ENCODE measurements at regions of chr20 and their contacts with region 1.

Region 1: GRCh38 chr20:35954200-35954906 is at the start of gene SCAND1:
- DNase-seq: peak; percentile 94 to 98 (median 97)
- ATAC-seq: peak; percentile 92
- H3K4me3 ChIP-seq: peak within 1 kb of the TSS; percentile 84
- H3K4me3 Mint-ChIP-seq: peak within 1 kb of the TSS; percentile 86 to 99 (median 99)
- H3K27ac ChIP-seq: peak within 1 kb of the TSS; percentile 98
- H3K27ac Mint-ChIP-seq: peak within 1 kb of the TSS; percentile 96 to 100 (median 99)
- H3K4me1 ChIP-seq: peaks cover 17 to 23% of the 10 kb centered on the region in 2 donors
- H3K4me1 Mint-ChIP-seq: peaks cover 13 to 36% (median 22%) of the 10 kb centered on the region in 7 donors
- H3K27me3 ChIP-seq: no peaks in the 10 kb centered on the region
- H3K27me3 Mint-ChIP-seq: peaks cover 0 to 2% (median 0%) of the 10 kb centered on the region in 5 donors
- total RNA-seq, gene SCAND1: 41.8 to 56.2 (median 51.7) TPM

Region 2: DNA sequence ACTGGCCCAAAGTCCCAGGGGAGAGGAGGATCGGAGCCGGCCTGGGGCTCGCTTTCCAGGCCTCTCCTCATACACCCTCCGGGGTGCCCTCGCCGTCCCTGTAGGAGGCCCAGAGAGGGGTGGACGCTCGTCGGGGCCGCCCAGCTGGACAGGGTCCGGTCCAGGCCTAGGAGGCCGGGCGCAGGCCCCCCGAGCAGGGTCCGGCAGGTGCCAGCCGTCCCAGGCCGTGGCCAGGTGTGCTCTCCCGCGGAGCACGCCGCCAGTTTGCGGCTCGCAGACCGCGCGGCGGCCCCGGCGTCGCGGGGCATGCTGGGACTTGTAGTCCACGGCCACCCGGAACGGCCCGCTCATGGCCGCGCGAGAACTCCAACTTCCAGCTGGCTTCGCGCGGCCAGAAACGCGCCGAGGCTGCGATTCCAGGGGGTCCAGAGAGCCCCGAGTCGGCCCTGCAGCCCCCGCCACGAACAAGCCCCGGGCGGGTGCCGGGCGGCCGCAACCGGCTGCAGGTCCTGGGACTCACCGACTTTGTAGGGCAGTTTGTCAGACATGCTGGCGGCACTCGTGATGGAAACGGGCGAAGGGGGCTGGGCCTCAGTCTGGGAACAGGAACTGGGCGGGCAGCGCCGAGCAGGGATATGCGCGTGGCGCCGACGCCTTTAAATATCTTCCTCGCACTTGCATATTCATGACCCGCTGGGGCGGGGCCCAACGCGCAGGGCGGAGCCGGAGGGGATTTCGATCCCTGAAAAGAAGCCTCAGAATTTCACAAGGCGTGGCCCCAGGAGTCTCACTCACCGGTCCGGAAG is 1651.4 kb before region 1 on chr20 and contains the start of gene AHCY:
- CTCF ChIA-PET with region 1: no interaction called
- POLR2A ChIA-PET with region 1: no interaction called
- intact Hi-C with region 1: loop called in 1 of 2 experiments (anchors 1 kb)
- DNase-seq: peak; percentile 84 to 95 (median 92)
- ATAC-seq: peak; percentile 96
- H3K4me3 ChIP-seq: peak within 1 kb of the TSS; percentile 91
- H3K4me3 Mint-ChIP-seq: peak within 1 kb of the TSS; percentile 90 to 96 (median 91)
- H3K27ac ChIP-seq: peak within 1 kb of the TSS; percentile 87
- H3K27ac Mint-ChIP-seq: peak within 1 kb of the TSS; percentile 89 to 95 (median 93)
- H3K4me1 ChIP-seq: peaks cover 3 to 6% of the 10 kb centered on the region in 2 donors
- H3K4me1 Mint-ChIP-seq: peaks cover 0 to 27% (median 14%) of the 10 kb centered on the region in 7 donors
- H3K27me3 ChIP-seq: no peaks in the 10 kb centered on the region
- H3K27me3 Mint-ChIP-seq: peaks cover 0 to 2% (median 0%) of the 10 kb centered on the region in 5 donors
- total RNA-seq, gene AHCY: 19.1 to 62.9 (median 23.7) TPM

Region 3: GRCh38 chr20:35284267-35284991 is 669.9 kb before region 1 on chr20 and contains the start of gene EIF6:
- CTCF ChIA-PET with region 1: interaction called, 3 read pairs
- POLR2A ChIA-PET with region 1: interaction called, 5 read pairs
- intact Hi-C with region 1: loop called in 1 of 2 experiments (anchors 2 kb)
- DNase-seq: peak; percentile 23 to 78 (median 53)
- ATAC-seq: peak; percentile 80
- H3K4me3 ChIP-seq: peak within 1 kb of the TSS; percentile 56
- H3K4me3 Mint-ChIP-seq: peak within 1 kb of the TSS; percentile 71 to 96 (median 91)
- H3K27ac ChIP-seq: peak within 1 kb of the TSS; percentile 89
- H3K27ac Mint-ChIP-seq: peak within 1 kb of the TSS; percentile 79 to 94 (median 87)
- H3K4me1 ChIP-seq: peaks cover 7 to 8% of the 10 kb centered on the region in 2 donors
- H3K4me1 Mint-ChIP-seq: peaks cover 18 to 43% (median 30%) of the 10 kb centered on the region in 7 donors
- H3K27me3 ChIP-seq: no peaks in the 10 kb centered on the region
- H3K27me3 Mint-ChIP-seq: no peaks in the 10 kb centered on the region
- total RNA-seq, gene EIF6: 35.4 to 117 (median 39.9) TPM

Region 4: GRCh38 chr20:35619196-35620095 is 334.9 kb before region 1 on chr20:
- CTCF ChIA-PET with region 1: no interaction called
- POLR2A ChIA-PET with region 1: interaction called, 12 read pairs
- intact Hi-C with region 1: loop called (anchors 1 kb)
- DNase-seq: peak; percentile 54 to 84 (median 68)
- ATAC-seq: peak; percentile 31
- H3K4me3 ChIP-seq: peak overlapping the region; percentile 70
- H3K4me3 Mint-ChIP-seq: peak overlapping the region; percentile 87 to 98 (median 91)
- H3K27ac ChIP-seq: peak overlapping the region; percentile 27
- H3K27ac Mint-ChIP-seq: peak overlapping the region; percentile 62 to 90 (median 85)
- H3K4me1 ChIP-seq: peaks cover 16 to 28% of the 10 kb centered on the region in 2 donors
- H3K4me1 Mint-ChIP-seq: peaks cover 13 to 45% (median 34%) of the 10 kb centered on the region in 7 donors
- H3K27me3 ChIP-seq: no peaks in the 10 kb centered on the region
- H3K27me3 Mint-ChIP-seq: peaks cover 0 to 3% (median 0%) of the 10 kb centered on the region in 5 donors

Region 5: DNA sequence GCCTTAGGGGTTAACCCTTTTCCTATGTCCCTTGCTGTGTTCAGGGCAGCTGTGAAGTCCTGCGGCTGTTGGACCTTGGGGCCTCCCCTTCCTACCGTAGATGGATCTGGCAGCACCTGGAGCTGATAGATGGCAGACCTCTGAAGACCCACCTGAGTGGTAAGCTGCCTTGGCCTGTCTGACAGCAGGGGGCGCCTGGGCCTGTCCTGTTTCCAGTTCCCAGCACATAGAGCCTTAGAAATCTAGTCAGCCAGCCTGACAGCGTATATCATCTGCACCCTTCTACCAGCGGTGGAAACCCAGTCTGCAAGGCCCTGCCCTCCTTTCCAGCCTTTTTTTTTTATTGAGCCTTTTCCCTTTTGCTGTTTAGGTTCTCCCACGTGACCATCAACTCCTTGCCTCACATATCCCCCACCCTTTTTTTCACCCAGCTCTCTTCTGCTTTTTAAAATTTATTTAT is 40.7 kb after region 1 on chr20:
- CTCF ChIA-PET with region 1: interaction called, 8 read pairs
- POLR2A ChIA-PET with region 1: interaction called, 8 read pairs
- intact Hi-C with region 1: loop called in 1 of 2 experiments (anchors 2 kb)
- DNase-seq: peak; percentile 59 to 82 (median 76)
- ATAC-seq: peak; percentile 91
- H3K4me3 ChIP-seq: no peak overlapping the region
- H3K4me3 Mint-ChIP-seq: no peak overlapping the region
- H3K27ac ChIP-seq: no peak overlapping the region
- H3K27ac Mint-ChIP-seq: peak overlapping the region in 2 of 9 donors; percentile 36 to 52
- H3K4me1 ChIP-seq: no peaks in the 10 kb centered on the region
- H3K4me1 Mint-ChIP-seq: peaks cover 4 to 13% (median 5%) of the 10 kb centered on the region in 7 donors
- H3K27me3 ChIP-seq: no peaks in the 10 kb centered on the region
- H3K27me3 Mint-ChIP-seq: peaks cover 0 to 9% (median 4%) of the 10 kb centered on the region in 5 donors

Region 6: GRCh38 chr20:36773597-36774390 is 819.4 kb after region 1 on chr20 and contains the start of gene DSN1:
- CTCF ChIA-PET with region 1: no interaction called
- POLR2A ChIA-PET with region 1: no interaction called
- intact Hi-C with region 1: loop called in 1 of 2 experiments (anchors 10 kb)
- DNase-seq: peak; percentile 94 to 100 (median 97)
- ATAC-seq: peak; percentile 90
- H3K4me3 ChIP-seq: peak within 1 kb of the TSS; percentile 96
- H3K4me3 Mint-ChIP-seq: peak within 1 kb of the TSS; percentile 83 to 98 (median 95)
- H3K27ac ChIP-seq: peak within 1 kb of the TSS; percentile 93
- H3K27ac Mint-ChIP-seq: peak within 1 kb of the TSS; percentile 90 to 100 (median 97)
- H3K4me1 ChIP-seq: peaks cover 8 to 13% of the 10 kb centered on the region in 2 donors
- H3K4me1 Mint-ChIP-seq: peaks cover 8 to 36% (median 27%) of the 10 kb centered on the region in 7 donors
- H3K27me3 ChIP-seq: no peaks in the 10 kb centered on the region
- H3K27me3 Mint-ChIP-seq: peaks cover 0 to 2% (median 0%) of the 10 kb centered on the region in 5 donors
- total RNA-seq, gene DSN1: 9.2 to 27.5 (median 13.4) TPM